Activated CD4-positive, alpha-beta memory T cell treated with anti-CD3 and anti-CD28 coated beads for 36 hours (primary cell): ENCODE measurements at regions of chr1 and their contacts with region 1.

Region 1: GRCh38 chr1:161225534-161226319 is at the start of gene TOMM40L:
- DNase-seq: peak; percentile 92
- H3K4me3 Mint-ChIP-seq: peak within 1 kb of the TSS; percentile 100
- H3K27ac Mint-ChIP-seq: peak within 1 kb of the TSS; percentile 86
- H3K4me1 Mint-ChIP-seq: peaks cover 23% of the 10 kb centered on the region
- H3K27me3 Mint-ChIP-seq: no peaks in the 10 kb centered on the region
- total RNA-seq, gene TOMM40L: 14.8 to 15.4 TPM

Region 2: GRCh38 chr1:160877221-160877620 is 348.5 kb before region 1 on chr1:
- CTCF ChIA-PET with region 1: no interaction called
- POLR2A ChIA-PET with region 1: no interaction called
- intact Hi-C with region 1: no loop called
- DNase-seq: no peak
- H3K4me3 Mint-ChIP-seq: no peak overlapping the region
- H3K27ac Mint-ChIP-seq: no peak overlapping the region
- H3K4me1 Mint-ChIP-seq: peaks cover 15% of the 10 kb centered on the region
- H3K27me3 Mint-ChIP-seq: no peaks in the 10 kb centered on the region

Region 3: DNA sequence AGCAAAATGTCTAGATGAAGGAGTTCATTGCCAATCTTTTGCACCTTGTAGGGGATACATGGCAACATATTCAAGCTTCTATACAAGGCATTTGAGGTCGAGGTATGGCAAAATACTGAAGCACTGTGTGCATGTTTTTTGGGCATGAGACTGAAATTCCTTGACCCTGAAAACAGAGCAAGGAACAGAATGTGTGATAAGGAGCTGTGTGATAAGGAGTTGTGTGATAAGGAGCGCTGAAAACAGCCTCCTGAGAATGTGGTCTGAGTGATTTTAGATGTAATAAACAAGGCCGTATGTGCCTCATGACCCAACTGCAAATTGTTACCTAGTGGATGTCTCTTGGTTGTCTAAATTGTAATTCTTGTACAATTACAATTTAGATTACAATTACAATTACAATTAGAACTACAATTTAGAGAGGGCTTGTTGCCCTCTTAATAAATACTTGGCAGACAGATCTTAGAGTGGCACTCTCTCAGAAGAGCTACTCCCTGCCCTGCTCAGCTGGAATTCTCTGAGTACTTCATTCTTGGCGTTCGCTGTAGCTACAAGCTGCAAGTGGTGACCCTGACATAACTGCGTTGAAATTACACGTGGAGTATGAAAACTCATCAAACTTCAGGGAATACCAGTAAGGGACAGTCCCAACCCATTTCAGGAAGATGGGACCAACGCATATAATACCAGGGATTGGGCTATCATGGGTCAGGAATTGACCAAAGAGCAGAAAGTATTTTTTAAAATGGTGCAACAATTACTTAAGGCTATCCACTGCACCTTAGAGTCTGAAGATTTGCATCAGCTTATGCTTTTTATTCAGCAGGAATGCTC is 320.7 kb before region 1 on chr1:
- CTCF ChIA-PET with region 1: no interaction called
- POLR2A ChIA-PET with region 1: no interaction called
- intact Hi-C with region 1: no loop called
- DNase-seq: no peak
- H3K4me3 Mint-ChIP-seq: no peak overlapping the region
- H3K27ac Mint-ChIP-seq: no peak overlapping the region
- H3K4me1 Mint-ChIP-seq: no peaks in the 10 kb centered on the region
- H3K27me3 Mint-ChIP-seq: no peaks in the 10 kb centered on the region

Region 4: GRCh38 chr1:161177112-161177935 is 48.4 kb before region 1 on chr1 and contains the start of gene B4GALT3:
- CTCF ChIA-PET with region 1: interaction called, 42 read pairs
- POLR2A ChIA-PET with region 1: interaction called, 5 read pairs
- intact Hi-C with region 1: no loop called
- DNase-seq: peak; percentile 97
- H3K4me3 Mint-ChIP-seq: peak within 1 kb of the TSS; percentile 100
- H3K27ac Mint-ChIP-seq: peak within 1 kb of the TSS; percentile 97
- H3K4me1 Mint-ChIP-seq: peaks cover 58% of the 10 kb centered on the region
- H3K27me3 Mint-ChIP-seq: no peaks in the 10 kb centered on the region
- total RNA-seq, gene B4GALT3: 46.3 to 50.9 TPM

Region 5: GRCh38 chr1:161201828-161202725 is 23.6 kb before region 1 on chr1 and contains the start of gene NDUFS2:
- CTCF ChIA-PET with region 1: interaction called, 103 read pairs
- POLR2A ChIA-PET with region 1: interaction called, 20 read pairs
- intact Hi-C with region 1: loop called (anchors 1 kb)
- DNase-seq: peak; percentile 97
- H3K4me3 Mint-ChIP-seq: peak within 1 kb of the TSS; percentile 88
- H3K27ac Mint-ChIP-seq: peak within 1 kb of the TSS; percentile 87
- H3K4me1 Mint-ChIP-seq: peaks cover 59% of the 10 kb centered on the region
- H3K27me3 Mint-ChIP-seq: no peaks in the 10 kb centered on the region
- total RNA-seq, gene NDUFS2: 98.3 to 103 TPM

Region 6: DNA sequence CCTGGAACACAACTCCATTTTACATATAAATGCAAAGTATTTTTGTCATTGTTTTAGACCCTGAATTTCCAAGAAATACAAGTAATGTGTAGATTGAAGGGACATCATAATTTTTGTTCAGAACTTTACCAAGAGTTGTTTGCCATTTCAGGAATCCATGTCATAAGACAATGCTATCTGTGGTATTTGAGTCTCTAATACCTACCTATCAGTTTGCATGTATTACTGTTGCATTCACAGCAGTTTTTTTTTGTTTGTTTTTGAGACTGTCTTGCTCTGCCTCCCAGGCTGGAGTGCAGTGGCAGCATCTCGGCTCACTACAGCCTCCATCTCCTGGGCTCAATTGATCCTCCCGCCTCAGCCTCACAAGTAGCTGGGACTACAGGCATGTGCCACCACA is 66.9 kb after region 1 on chr1:
- CTCF ChIA-PET with region 1: interaction called, 94 read pairs
- POLR2A ChIA-PET with region 1: no interaction called
- intact Hi-C with region 1: loop called (anchors 1 kb)
- DNase-seq: no peak
- H3K4me3 Mint-ChIP-seq: no peak overlapping the region
- H3K27ac Mint-ChIP-seq: no peak overlapping the region
- H3K4me1 Mint-ChIP-seq: no peaks in the 10 kb centered on the region
- H3K27me3 Mint-ChIP-seq: no peaks in the 10 kb centered on the region

Region 7: DNA sequence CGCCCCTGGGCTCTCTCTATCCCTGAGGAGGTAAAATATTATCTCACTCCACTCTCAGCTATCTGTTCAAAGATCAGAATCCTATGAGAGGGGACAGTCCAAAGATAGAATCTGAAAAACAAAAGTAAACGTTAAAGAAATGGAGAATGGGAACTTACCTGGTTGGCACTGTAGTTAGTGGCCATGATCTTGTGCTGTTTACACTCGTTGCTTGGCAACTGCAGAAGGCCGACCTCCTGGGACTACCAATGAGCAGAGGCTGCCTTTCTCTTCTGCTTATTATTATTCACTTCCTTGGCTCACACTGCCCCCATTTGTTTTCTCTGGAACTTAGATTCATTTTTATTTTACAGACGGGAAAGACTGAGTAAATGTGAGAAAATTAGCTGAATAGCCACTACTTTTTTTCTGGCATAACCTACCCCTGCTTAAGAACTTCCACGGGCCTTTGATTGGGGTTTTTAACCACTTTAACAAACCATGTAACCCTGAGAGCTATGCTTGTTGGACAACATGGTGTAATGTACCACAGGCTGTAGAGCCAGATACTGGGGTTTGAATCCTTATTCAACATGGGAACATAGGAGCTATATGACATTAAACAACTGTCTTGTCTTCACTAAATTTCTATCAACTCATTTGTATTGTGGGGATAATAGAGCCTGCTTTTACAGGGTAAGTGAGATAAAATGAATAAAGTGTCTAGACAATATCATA is 142.1 kb after region 1 on chr1 and contains the start of gene CFAP126:
- CTCF ChIA-PET with region 1: interaction called, 18 read pairs
- POLR2A ChIA-PET with region 1: no interaction called
- intact Hi-C with region 1: no loop called
- DNase-seq: peak; percentile 66
- H3K4me3 Mint-ChIP-seq: no peak within 1 kb of the TSS
- H3K27ac Mint-ChIP-seq: peak within 1 kb of the TSS; percentile 49
- H3K4me1 Mint-ChIP-seq: peaks cover 22% of the 10 kb centered on the region
- H3K27me3 Mint-ChIP-seq: no peaks in the 10 kb centered on the region
- total RNA-seq, gene CFAP126: 0.29 TPM in 1 of 2 experiments, not detected in the other

Region 8: GRCh38 chr1:161389691-161390558 is 164.2 kb after region 1 on chr1:
- CTCF ChIA-PET with region 1: interaction called, 213 read pairs
- POLR2A ChIA-PET with region 1: interaction called, 5 read pairs
- intact Hi-C with region 1: loop called (anchors 1 kb)
- DNase-seq: peak; percentile 95
- H3K4me3 Mint-ChIP-seq: peak overlapping the region; percentile 93
- H3K27ac Mint-ChIP-seq: peak overlapping the region; percentile 96
- H3K4me1 Mint-ChIP-seq: peaks cover 45% of the 10 kb centered on the region
- H3K27me3 Mint-ChIP-seq: no peaks in the 10 kb centered on the region

Region 9: GRCh38 chr1:161486806-161487741 is 261.3 kb after region 1 on chr1:
- CTCF ChIA-PET with region 1: no interaction called
- POLR2A ChIA-PET with region 1: no interaction called
- intact Hi-C with region 1: no loop called
- DNase-seq: peak; percentile 26
- H3K4me3 Mint-ChIP-seq: no peak overlapping the region
- H3K27ac Mint-ChIP-seq: no peak overlapping the region
- H3K4me1 Mint-ChIP-seq: peaks cover 13% of the 10 kb centered on the region
- H3K27me3 Mint-ChIP-seq: peaks cover 25% of the 10 kb centered on the region

Region 10: GRCh38 chr1:163174524-163175437 is 1949.1 kb after region 1 on chr1:
- CTCF ChIA-PET with region 1: no interaction called
- POLR2A ChIA-PET with region 1: no interaction called
- intact Hi-C with region 1: no loop called
- DNase-seq: peak; percentile 59
- H3K4me3 Mint-ChIP-seq: no peak overlapping the region
- H3K27ac Mint-ChIP-seq: no peak overlapping the region
- H3K4me1 Mint-ChIP-seq: no peaks in the 10 kb centered on the region
- H3K27me3 Mint-ChIP-seq: peaks cover 6% of the 10 kb centered on the region